Dorsolateral prefrontal cortex (tissue), 120 donors: ENCODE measurements at regions of chr18 and their contacts with region 1.

Region 1: DNA sequence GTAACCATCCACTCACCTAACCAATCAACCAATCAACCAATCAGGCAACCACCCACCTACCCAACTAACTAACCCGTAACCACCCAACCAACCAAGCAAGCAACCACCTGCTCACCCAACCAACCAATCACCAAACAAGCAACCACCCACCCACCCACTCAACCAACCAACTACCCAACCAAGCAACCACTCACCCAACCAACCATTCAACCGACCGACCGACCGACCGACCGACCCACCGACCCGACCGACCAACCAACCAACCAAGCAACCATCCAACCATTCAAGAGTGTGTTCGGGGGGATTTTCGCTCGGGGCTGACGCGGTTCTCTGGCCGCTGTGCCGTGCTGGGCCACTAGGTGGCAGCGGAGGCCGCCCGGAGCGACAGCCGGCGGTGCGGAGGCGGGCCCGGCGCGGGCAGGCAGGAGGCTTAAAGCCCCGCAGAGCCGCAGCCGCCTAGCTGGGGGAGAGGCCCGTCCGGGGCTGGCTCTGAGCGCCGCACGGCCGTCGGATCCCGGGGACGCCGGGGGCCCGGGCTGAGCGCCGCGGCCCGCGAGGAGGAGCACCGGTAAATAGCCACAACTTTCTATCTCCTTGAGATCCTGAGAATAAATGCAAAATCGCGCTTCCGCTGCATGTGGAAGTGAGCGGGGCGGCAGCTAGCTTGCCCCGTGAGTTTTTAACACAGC is at the start of gene MC5R:
- DNase-seq: peak; percentile 24 to 84 (median 62)
- H3K4me3 ChIP-seq: peak within 1 kb of the TSS; percentile 28 to 78 (median 57)
- H3K27ac ChIP-seq: no peak within 1 kb of the TSS
- H3K27me3 ChIP-seq: peaks cover 0 to 12% (median 0%) of the 10 kb centered on the region in 45 donors
- CTCF ChIP-seq: peak; percentile 14 to 93 (median 82)
- total RNA-seq, gene MC5R: 0.24 to 1.2 (median 0.48) TPM in 51 of 120 experiments, not detected in the others

Region 2: GRCh38 chr18:13688191-13689136 is 135.4 kb before region 1 on chr18:
- intact Hi-C with region 1: no loop called
- DNase-seq: peak in 1 of 10 donors; percentile 39
- H3K4me3 ChIP-seq: no peak overlapping the region
- H3K27ac ChIP-seq: no peak overlapping the region
- H3K27me3 ChIP-seq: no peaks in the 10 kb centered on the region
- CTCF ChIP-seq: no peak

Region 3: GRCh38 chr18:13989199-13989598 is 165.3 kb after region 1 on chr18:
- intact Hi-C with region 1: loop called in 1 of 2 experiments (anchors 10 kb)
- DNase-seq: no peak
- H3K4me3 ChIP-seq: no peak overlapping the region
- H3K27ac ChIP-seq: no peak overlapping the region
- H3K27me3 ChIP-seq: peaks cover 0 to 3% (median 0%) of the 10 kb centered on the region in 45 donors
- CTCF ChIP-seq: no peak